ENCODE measurements at regions of chr15 and their contacts with region 1.

Region 1: GRCh38 chr15:77118882-77119321 is 48.0 kb upstream of the TSPAN3 start:
- DNase-seq: peak; percentile 60
- CTCF ChIP-seq: peak; percentile 81

Region 2: DNA sequence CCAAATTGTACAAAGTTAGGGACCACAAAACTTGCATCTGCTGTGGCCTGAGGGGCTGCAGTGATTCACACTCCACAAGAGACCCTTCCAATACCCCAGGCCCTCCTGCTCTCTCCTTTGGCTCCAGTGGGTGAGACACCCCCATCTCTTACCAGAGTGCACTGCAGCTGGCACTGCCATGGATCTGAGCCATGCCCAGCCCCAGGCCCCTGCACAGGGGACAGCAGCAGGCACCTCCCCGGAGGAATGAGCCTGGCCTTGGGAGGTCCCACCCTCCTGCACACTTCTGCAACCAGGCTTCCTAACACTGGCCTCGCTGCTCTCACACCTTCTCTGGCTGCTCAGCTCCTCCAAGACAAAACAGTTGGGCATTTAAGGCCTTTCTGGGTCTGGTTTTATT is 31.7 kb before region 1 on chr15:
- CTCF ChIA-PET with region 1: no interaction called
- POLR2A ChIA-PET with region 1: no interaction called
- DNase-seq: no peak
- CTCF ChIP-seq: no peak

Region 3: DNA sequence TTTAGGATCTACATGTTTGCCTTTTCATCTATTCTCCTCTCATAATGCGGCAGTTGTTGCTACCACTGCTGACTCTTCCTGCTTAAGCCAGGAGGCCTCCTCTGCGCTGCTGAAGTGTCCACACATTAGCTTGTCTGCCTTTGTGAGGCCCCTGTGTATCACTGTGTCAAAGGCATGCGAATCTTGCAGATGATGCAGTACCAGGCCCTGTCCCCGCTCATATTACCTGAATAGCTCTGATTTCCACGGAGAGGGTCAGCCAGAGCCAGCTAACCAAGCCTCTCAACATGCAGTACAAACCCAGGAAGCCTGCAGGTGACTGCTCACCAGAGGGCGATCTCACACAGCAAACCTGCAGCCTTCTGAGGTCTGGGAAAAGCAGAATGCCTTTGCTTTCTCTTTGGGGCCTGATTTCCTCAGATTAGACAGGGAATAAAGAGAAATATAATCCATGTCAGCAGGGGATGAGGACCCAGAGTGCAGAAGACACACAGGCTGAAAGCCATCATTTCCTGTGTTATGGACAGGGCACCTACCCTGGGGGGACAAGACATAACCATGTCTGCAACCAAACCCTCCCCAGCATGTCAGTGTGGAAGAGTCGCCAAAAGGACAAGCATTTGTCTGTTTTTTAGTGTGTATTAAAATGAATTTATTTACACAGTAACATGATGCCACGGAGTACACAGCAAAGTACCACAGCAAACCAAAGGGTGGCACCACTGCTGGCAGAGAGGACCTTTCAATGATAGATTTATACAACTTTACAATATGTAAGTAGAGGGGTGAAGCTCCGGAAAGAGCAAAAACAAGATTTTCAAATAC is 11.2 kb before region 1 on chr15:
- CTCF ChIA-PET with region 1: interaction called, 43 read pairs
- POLR2A ChIA-PET with region 1: no interaction called
- DNase-seq: peak; percentile 66
- CTCF ChIP-seq: peak; percentile 68

Region 4: GRCh38 chr15:77179541-77179998 is 60.7 kb after region 1 on chr15:
- CTCF ChIA-PET with region 1: interaction called, 18 read pairs
- POLR2A ChIA-PET with region 1: no interaction called
- DNase-seq: peak; percentile 47
- CTCF ChIP-seq: peak; percentile 30

Region 5: GRCh38 chr15:77186594-77187011 is 67.7 kb after region 1 on chr15:
- CTCF ChIA-PET with region 1: interaction called, 18 read pairs
- POLR2A ChIA-PET with region 1: no interaction called
- DNase-seq: peak; percentile 25
- CTCF ChIP-seq: peak; percentile 69

Region 6: DNA sequence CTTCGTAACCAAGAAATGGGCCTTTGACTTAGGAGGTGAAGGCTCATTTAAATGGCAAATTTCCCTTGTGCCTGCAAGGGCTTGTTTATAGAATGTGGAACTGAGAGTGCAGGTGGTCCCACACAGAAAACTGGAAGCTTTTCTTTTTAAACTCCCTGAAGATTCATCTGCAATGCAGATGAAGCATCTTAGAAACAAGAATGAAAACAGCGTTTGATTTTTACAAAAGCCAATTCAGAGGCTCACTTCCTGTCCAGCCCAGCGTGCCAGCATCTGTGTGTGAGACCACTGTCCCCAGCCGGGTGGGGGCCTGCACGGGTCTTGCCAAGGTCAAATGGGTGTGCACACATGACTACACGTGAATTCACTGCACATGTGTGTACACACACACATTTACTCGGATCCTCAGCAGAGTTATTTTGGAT is 419.1 kb after region 1 on chr15:
- CTCF ChIA-PET with region 1: interaction called, 102 read pairs
- POLR2A ChIA-PET with region 1: no interaction called
- DNase-seq: peak; percentile 78
- CTCF ChIP-seq: no peak